Colonic mucosa (tissue), 4 donors: ENCODE measurements at regions of chr7 and their contacts with region 1.

Region 1: DNA sequence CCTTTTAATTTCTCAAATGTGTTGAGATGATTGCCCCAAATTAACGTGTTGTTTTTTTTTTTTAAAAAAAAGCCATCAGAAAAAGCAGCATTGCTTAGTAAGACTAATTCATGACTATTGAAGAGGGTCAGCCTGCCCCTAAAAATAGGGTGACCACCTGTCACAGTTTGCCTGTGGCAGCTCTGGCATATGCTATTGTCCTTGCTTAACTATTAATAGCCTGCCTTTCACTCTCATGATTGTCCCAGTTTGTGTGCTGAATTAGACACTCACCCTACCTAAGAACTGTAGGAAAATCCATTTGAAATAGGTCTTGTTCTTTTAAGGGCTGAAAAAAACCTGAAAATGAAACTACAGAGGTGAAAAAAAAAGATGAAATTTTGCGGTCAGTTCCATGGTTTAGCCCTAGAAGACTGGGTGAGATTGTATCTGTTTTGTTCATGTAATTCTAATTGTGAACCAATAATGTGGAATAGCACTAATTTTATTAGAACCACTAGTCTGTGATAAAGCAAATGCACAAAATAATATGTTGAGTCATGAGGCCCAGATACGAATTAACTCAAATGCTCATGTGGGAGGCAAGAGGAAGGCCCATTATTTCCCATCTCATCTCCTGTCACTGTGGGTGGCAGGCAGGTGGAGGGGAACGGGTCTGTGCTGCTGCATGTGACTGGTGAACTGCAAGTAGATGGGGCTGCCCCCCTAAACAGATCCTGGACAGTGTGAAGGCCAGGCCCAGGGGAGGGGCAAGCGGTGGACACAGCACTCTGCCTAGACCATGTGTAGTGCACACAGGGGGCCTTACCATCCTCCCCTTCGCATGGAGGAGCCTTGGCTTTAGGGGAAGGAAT is 265.4 kb upstream of the NFE2L3 start:
- DNase-seq: no peak
- H3K4me3 ChIP-seq: no peak overlapping the region
- H3K27ac ChIP-seq: no peak overlapping the region
- H3K4me1 ChIP-seq: no peaks in the 10 kb centered on the region
- H3K27me3 ChIP-seq: peaks cover 6% of the 10 kb centered on the region
- CTCF ChIP-seq: no peak

Region 2: DNA sequence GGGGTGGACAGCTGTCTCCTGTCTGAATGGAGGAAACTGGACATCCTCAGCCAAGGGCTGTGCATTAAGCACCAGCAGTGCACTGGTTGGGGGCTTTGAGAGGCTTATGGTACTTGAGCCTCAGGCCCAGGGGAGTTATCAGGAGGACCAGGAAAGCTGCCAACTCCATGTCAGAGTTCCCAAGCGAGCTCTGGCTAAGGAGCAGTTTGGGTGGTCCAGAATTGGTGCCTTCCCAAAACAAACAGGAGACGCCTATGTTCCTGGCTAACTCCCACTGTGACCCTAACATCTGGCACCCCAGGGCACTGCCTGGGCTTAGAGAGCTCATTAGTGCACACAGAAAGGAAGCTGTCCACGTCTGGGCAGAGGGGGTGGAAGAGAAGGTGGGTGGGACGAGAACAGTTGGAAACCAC is 249.7 kb before region 1 on chr7:
- intact Hi-C with region 1: no loop called
- DNase-seq: peak; percentile 28
- H3K4me3 ChIP-seq: no peak overlapping the region
- H3K27ac ChIP-seq: no peak overlapping the region
- H3K4me1 ChIP-seq: no peaks in the 10 kb centered on the region
- H3K27me3 ChIP-seq: no peaks in the 10 kb centered on the region
- CTCF ChIP-seq: no peak

Region 3: GRCh38 chr7:25663877-25664276 is 222.7 kb before region 1 on chr7:
- intact Hi-C with region 1: no loop called
- DNase-seq: no peak
- H3K4me3 ChIP-seq: no peak overlapping the region
- H3K27ac ChIP-seq: no peak overlapping the region
- H3K4me1 ChIP-seq: no peaks in the 10 kb centered on the region
- H3K27me3 ChIP-seq: no peaks in the 10 kb centered on the region
- CTCF ChIP-seq: no peak

Region 4: DNA sequence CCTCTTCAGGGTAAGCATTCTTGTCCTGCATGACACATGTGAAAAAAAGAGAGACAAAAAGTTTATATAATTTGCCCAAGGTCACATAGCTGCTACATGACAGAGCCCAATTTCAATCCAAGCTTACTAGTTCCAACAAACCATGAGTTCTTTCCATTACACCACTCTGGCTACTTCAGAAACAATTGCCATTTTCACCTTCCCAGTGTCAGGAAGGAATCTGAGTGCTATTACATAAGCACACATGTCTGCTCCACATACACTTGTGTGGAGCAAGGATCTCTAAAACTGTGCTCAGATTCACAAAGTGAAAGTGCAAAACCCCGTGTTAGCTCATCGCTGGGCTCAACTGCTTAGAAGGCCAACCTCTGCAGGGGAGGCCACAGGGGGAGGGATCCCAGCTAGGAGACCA is 90.8 kb before region 1 on chr7:
- intact Hi-C with region 1: no loop called
- DNase-seq: no peak
- H3K4me3 ChIP-seq: no peak overlapping the region
- H3K27ac ChIP-seq: no peak overlapping the region
- H3K4me1 ChIP-seq: no peaks in the 10 kb centered on the region
- H3K27me3 ChIP-seq: no peaks in the 10 kb centered on the region
- CTCF ChIP-seq: no peak

Region 5: DNA sequence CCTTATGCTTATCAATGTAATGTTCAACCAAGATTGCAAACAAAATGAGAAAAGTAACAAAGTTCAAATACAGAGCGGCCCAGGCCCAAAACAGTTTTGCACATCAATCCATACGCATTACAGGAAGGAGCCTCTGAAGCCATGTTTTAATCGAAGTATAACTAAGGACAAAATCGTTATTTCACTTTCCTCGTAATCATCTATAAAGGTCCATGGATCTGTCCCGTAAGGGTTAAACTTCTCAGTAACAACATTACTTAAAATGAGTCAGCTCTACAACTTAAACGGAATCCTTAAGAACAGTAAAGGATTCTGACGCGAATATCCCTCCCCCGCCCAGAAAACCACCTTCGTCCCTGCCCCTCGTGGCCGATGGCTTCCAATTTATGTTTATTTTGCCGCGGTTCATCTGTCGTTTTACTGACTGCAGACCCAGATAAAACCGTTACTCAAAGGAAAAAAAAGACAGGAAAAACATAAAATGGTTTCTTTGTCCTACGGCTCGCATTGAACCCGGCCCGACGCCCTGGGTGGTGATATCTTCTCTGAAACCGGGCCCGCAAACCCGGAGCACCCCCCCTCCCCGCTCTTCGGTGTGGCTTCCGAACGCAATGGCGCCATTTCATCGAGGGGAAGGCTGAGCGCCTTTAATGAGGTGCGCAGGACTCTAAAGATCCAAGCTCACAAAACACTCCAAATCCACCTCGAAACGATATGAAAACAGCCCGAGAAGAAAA is 312.9 kb after region 1 on chr7:
- intact Hi-C with region 1: loop called (anchors 10 kb)
- DNase-seq: peak; percentile 67
- H3K4me3 ChIP-seq: peak overlapping the region; percentile 90
- H3K27ac ChIP-seq: peak overlapping the region; percentile 100
- H3K4me1 ChIP-seq: peaks cover 15% of the 10 kb centered on the region
- H3K27me3 ChIP-seq: no peaks in the 10 kb centered on the region
- CTCF ChIP-seq: no peak

Region 6: GRCh38 chr7:26490650-26491624 is 604.3 kb after region 1 on chr7:
- intact Hi-C with region 1: loop called (anchors 10 kb)
- DNase-seq: no peak
- H3K4me3 ChIP-seq: no peak overlapping the region
- H3K27ac ChIP-seq: no peak overlapping the region
- H3K4me1 ChIP-seq: no peaks in the 10 kb centered on the region
- H3K27me3 ChIP-seq: no peaks in the 10 kb centered on the region
- CTCF ChIP-seq: no peak

Region 7: GRCh38 chr7:26574476-26574875 is 687.9 kb after region 1 on chr7:
- intact Hi-C with region 1: no loop called
- DNase-seq: no peak
- H3K4me3 ChIP-seq: no peak overlapping the region
- H3K27ac ChIP-seq: no peak overlapping the region
- H3K4me1 ChIP-seq: no peaks in the 10 kb centered on the region
- H3K27me3 ChIP-seq: no peaks in the 10 kb centered on the region
- CTCF ChIP-seq: no peak